Naive thymus-derived CD4-positive, alpha-beta T cell (primary cell): ENCODE measurements at regions of chr2 and their contacts with region 1.

Region 1: GRCh38 chr2:103161456-103162289 is 399.8 kb downstream of the TMEM182 start:
- DNase-seq: no peak
- ATAC-seq: no peak
- H3K4me3 ChIP-seq: no peak overlapping the region
- H3K4me3 Mint-ChIP-seq: no peak overlapping the region
- H3K27ac ChIP-seq: no peak overlapping the region
- H3K27ac Mint-ChIP-seq: no peak overlapping the region
- H3K4me1 ChIP-seq: no peaks in the 10 kb centered on the region
- H3K4me1 Mint-ChIP-seq: no peaks in the 10 kb centered on the region
- H3K27me3 ChIP-seq: no peaks in the 10 kb centered on the region
- H3K27me3 Mint-ChIP-seq: peaks cover 0 to 7% (median under 1%) of the 10 kb centered on the region in 5 donors

Region 2: DNA sequence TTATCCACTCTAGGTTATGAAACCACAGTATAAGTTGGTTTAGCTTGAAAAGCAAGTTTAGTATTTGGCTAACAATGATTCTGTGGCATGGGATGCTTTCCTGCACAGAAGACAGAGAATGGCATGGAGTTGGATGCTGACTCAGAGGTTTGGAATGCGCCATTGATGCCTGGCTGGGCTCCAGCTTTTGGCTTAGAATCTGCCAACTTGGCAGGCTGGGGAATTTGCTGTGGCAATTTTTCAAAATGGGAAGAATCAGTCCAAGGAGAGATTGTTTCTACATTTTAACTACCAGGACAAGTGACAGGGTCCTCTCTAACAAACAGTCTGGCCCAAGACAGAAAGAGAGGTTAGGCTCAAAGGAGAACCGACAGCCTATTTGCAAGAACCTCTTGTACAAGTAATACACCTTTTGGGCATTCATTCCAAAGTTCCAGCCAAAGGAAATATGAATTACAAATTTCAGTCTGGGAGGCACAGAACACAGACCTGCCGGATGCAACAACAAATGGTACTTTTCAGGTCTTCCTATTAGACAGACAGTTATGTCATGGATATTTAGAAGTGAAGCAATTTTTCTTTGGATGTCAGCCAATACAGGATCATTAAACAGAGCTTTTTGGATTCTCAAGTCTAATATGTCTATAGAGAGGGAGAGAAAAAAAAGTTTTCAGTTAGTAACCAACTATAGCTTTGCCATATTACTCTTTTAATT is 627.9 kb after region 1 on chr2:
- CTCF ChIA-PET with region 1: no interaction called
- POLR2A ChIA-PET with region 1: no interaction called
- intact Hi-C with region 1: no loop called
- DNase-seq: no peak
- ATAC-seq: no peak
- H3K4me3 ChIP-seq: no peak overlapping the region
- H3K4me3 Mint-ChIP-seq: no peak overlapping the region
- H3K27ac ChIP-seq: no peak overlapping the region
- H3K27ac Mint-ChIP-seq: no peak overlapping the region
- H3K4me1 ChIP-seq: no peaks in the 10 kb centered on the region
- H3K4me1 Mint-ChIP-seq: no peaks in the 10 kb centered on the region
- H3K27me3 ChIP-seq: no peaks in the 10 kb centered on the region
- H3K27me3 Mint-ChIP-seq: no peaks in the 10 kb centered on the region

Region 3: DNA sequence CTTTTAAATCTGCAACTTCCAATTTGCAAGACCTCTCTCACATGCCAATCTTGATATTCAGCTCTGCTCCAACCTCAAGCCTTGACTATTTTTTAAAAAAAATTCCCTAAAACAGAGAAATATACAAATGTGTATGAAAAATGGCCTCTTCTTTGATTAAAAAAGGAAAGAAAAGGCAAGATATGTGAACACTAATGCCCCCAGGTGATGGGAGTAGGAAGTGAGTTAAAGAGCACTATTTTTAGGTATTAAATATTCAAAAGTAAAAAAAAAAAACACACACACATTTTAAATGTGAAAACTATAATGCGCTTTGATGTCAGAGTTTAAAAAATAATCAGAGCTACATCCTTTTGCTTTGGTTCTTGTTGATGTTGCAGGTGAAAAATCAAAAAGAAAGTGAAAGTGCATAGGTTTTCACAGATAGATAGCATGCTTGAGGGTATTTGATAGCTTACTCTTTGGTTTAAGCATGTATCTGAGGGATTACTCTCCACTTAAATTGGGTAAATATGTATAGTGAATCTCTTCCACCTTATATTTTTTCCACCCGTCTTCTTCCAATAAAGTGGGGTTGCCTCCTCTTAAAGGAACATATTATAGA is 1286.3 kb after region 1 on chr2:
- CTCF ChIA-PET with region 1: no interaction called
- POLR2A ChIA-PET with region 1: no interaction called
- intact Hi-C with region 1: loop called in 1 of 2 experiments (anchors 5 kb)
- DNase-seq: peak in 4 of 9 donors; percentile 3 to 21 (median 19)
- ATAC-seq: no peak
- H3K4me3 ChIP-seq: peak overlapping the region; percentile 11
- H3K4me3 Mint-ChIP-seq: peak overlapping the region in 9 of 10 donors; percentile 19 to 80 (median 67)
- H3K27ac ChIP-seq: no peak overlapping the region
- H3K27ac Mint-ChIP-seq: peak overlapping the region in 6 of 9 donors; percentile 7 to 72 (median 61)
- H3K4me1 ChIP-seq: peaks cover 0 to 6% of the 10 kb centered on the region in 2 donors
- H3K4me1 Mint-ChIP-seq: peaks cover 3 to 25% (median 18%) of the 10 kb centered on the region in 7 donors
- H3K27me3 ChIP-seq: no peaks in the 10 kb centered on the region
- H3K27me3 Mint-ChIP-seq: peaks cover 0 to 3% (median 0%) of the 10 kb centered on the region in 5 donors

Region 4: GRCh38 chr2:104872866-104873688 is 1711.4 kb after region 1 on chr2:
- CTCF ChIA-PET with region 1: no interaction called
- POLR2A ChIA-PET with region 1: no interaction called
- intact Hi-C with region 1: loop called in 1 of 2 experiments (anchors 5 kb)
- DNase-seq: peak in 4 of 9 donors; percentile 17 to 53 (median 37)
- ATAC-seq: peak; percentile 64
- H3K4me3 ChIP-seq: no peak overlapping the region
- H3K4me3 Mint-ChIP-seq: peak overlapping the region; percentile 41 to 76 (median 56)
- H3K27ac ChIP-seq: no peak overlapping the region
- H3K27ac Mint-ChIP-seq: no peak overlapping the region
- H3K4me1 ChIP-seq: no peaks in the 10 kb centered on the region
- H3K4me1 Mint-ChIP-seq: peaks cover 0 to 18% (median 12%) of the 10 kb centered on the region in 7 donors
- H3K27me3 ChIP-seq: peaks cover 0 to 3% of the 10 kb centered on the region in 2 donors
- H3K27me3 Mint-ChIP-seq: peaks cover 51 to 73% (median 61%) of the 10 kb centered on the region in 5 donors